ENCODE measurements at regions of chr12 and their contacts with region 1.

Region 1: DNA sequence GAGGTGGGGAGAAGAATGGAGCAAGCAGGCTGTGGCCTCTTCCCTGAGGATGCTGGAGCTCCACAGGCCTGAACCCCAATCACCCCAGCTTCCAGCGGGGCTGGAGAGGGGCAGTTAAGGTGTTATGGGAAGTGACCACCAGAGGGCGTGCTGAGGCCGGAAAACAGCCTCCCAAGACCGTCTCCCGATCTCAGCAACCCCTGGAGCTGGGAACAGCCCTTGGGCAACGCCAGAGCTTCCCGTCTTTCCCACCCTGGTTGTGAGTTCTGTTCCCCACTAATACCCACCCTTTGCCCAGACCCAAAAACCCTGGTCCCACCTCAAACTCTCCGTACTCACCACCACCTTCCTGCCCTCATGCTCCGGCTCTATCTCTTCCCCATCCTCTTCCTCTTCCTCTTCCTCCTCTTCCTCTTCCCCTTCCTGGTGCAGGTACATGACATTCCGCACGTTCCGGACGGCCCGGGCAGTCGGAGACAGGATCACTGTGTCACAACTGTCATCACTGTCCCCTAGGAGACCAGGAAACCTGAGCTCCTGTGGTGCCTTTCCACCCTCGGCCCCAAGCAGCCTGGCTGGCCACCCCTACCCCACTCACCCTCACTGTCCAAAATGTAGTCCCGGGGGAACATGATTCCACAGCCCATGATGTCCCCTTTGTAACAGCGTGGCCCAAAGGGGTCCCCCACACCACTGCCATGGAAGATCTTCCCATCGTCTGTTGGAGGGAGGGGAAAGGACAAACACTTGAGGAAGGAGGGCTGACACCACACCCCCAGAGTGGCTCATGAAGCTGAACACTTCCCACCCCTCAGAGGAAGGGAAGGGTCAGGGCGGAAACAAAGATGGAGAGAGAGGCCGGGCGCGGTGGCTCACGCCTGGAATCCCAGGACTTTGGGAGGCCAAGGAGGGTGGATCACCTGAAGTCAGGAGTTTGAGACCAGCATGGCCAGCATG is 12.9 kb downstream of the SPRYD3 start:
- DNase-seq: no peak
- ATAC-seq: peak; percentile 90
- H3K4me3 ChIP-seq: no peak overlapping the region
- H3K27ac ChIP-seq: no peak overlapping the region
- H3K4me1 ChIP-seq: no peaks in the 10 kb centered on the region
- H3K27me3 ChIP-seq: no peaks in the 10 kb centered on the region
- CTCF ChIP-seq: peak; percentile 72 to 85 (median 85)
- EP300 ChIP-seq: no peak
- POLR2A ChIP-seq: no peak
- RAD21 ChIP-seq: peak; percentile 75

Region 2: GRCh38 chr12:53079226-53080117 is 13.2 kb after region 1 on chr12 and contains the start of gene SPRYD3:
- CTCF ChIA-PET with region 1: interaction called, 90 read pairs
- POLR2A ChIA-PET with region 1: interaction called, 7 read pairs
- RAD21 ChIA-PET with region 1: interaction called, 18 read pairs
- SMC1A ChIA-PET with region 1: interaction called, 19 read pairs
- in situ Hi-C with region 1: no loop called
- intact Hi-C with region 1: no loop called
- DNase-seq: peak; percentile 77
- ATAC-seq: peak; percentile 99
- H3K4me3 ChIP-seq: peak within 1 kb of the TSS; percentile 90
- H3K27ac ChIP-seq: peak within 1 kb of the TSS; percentile 74
- H3K4me1 ChIP-seq: no peaks in the 10 kb centered on the region; the same call in none of the 2 replicates
- H3K27me3 ChIP-seq: no peaks in the 10 kb centered on the region
- CTCF ChIP-seq: no peak
- EP300 ChIP-seq: no peak
- POLR2A ChIP-seq: peak; percentile 95
- RAD21 ChIP-seq: no peak
- polyA plus RNA-seq, gene SPRYD3: 2.3 to 3.5 TPM

Region 3: GRCh38 chr12:53098982-53099651 is 32.9 kb after region 1 on chr12:
- CTCF ChIA-PET with region 1: interaction called, 355 read pairs
- POLR2A ChIA-PET with region 1: interaction called, 7 read pairs
- RAD21 ChIA-PET with region 1: interaction called, 84 read pairs
- SMC1A ChIA-PET with region 1: interaction called, 126 read pairs
- in situ Hi-C with region 1: no loop called
- intact Hi-C with region 1: loop called (anchors 1 kb)
- DNase-seq: no peak
- ATAC-seq: peak; percentile 44
- H3K4me3 ChIP-seq: no peak overlapping the region
- H3K27ac ChIP-seq: no peak overlapping the region
- H3K4me1 ChIP-seq: peaks cover 28% of the 10 kb centered on the region
- H3K27me3 ChIP-seq: peaks cover 0 to 6% of the 10 kb centered on the region in 2 experiments; a peak in 2 of 4 replicates
- CTCF ChIP-seq: peak; percentile 83 to 94 (median 89)
- EP300 ChIP-seq: no peak
- POLR2A ChIP-seq: no peak
- RAD21 ChIP-seq: peak; percentile 86

Region 4: DNA sequence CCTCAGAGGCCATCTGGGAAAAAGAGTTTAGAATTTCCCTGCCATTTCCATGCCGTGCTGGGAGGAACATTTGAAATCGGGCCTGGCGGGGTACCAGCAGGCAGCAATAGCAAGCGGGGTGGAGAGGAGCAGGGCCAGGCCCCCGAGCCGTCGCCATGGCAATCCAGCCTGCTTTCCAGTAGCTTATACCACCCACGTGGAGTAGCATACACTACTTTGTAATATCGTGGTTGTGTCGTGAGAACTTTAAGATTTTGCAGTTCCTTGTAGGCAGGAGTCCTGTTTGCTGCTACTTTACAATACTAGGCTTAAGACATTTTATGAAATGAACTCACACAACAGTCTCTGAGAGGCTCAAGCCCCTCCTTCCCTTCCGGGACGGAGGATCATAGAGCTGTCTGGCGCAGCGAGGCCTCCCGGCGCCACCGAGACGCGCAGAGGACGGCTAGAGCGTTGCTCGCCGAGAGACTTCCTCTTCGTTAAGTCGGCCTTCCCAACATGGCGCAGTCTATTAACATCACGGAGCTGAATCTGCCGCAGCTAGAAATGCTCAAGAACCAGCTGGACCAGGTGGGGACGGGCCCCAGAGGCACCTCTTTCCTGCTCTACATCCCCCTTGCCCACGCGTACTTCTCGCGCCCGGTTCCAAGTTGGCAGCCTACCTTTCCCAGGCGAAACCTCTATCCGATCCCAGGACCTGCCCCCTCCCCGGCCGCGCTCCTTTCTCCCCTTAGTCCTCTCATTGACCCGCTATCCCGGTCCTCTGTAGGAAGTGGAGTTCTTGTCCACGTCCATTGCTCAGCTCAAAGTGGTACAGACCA is 229.0 kb after region 1 on chr12 and contains the start of gene PFDN5:
- CTCF ChIA-PET with region 1: interaction called, 10 read pairs
- POLR2A ChIA-PET with region 1: no interaction called
- RAD21 ChIA-PET with region 1: no interaction called
- SMC1A ChIA-PET with region 1: no interaction called
- in situ Hi-C with region 1: no loop called
- intact Hi-C with region 1: no loop called
- DNase-seq: peak; percentile 73
- ATAC-seq: peak; percentile 95
- H3K4me3 ChIP-seq: peak within 1 kb of the TSS; percentile 82
- H3K27ac ChIP-seq: peak within 1 kb of the TSS; percentile 75
- H3K4me1 ChIP-seq: peaks cover 21% of the 10 kb centered on the region
- H3K27me3 ChIP-seq: no peaks in the 10 kb centered on the region
- CTCF ChIP-seq: peak in 1 of 3 experiments; percentile 8; a peak in 1 of 6 replicates
- EP300 ChIP-seq: 0 out of 4 replicates have a peak, but pooled peaks of 1 of the 2 experiments have one; percentile 27
- POLR2A ChIP-seq: peak; percentile 90
- RAD21 ChIP-seq: no peak
- polyA plus RNA-seq, gene PFDN5: 1,522 to 1,596 TPM